ENCODE measurements at regions of chr1 and their contacts with region 1.

Region 1: DNA sequence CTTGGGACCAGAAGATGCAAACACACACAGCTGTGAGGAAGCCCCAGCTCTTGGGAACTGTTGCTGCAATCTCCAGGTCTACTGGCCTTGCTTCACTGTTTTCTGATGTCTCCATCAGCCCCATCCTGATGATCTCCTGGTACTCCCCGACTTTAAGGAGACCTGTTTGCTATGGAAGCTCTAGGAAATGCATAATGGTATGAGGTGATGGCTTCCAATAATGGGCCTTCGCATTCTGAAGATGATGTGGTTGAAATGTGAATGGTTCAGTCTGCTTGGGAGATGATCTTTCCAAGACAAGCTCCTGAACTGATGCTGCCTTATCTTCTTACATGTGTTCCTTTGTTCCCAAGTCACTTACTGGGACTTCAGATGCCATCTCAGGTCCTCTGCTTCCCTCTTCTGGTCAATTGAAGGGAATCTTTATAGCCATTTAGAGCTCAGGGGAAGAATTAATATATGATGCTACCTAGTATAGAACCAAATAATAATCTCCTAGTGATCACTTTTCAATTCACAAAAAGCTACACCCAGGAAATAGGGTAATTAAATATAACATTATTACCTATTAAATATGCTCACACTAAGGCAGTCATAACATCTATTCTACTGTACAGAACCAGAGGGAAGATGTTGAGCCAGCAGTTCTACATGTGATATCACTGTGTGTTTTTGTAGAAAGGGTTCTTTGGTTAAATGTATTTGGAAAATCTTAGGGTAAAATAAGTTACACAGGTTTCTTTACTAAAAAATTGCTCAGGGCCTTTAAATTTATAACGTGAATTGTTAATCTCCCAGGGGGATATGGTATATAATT is 73.9 kb upstream of the VTCN1 start:
- DNase-seq: no peak

Region 2: GRCh38 chr1:117067533-117068370 is 216.9 kb before region 1 on chr1:
- intact Hi-C with region 1: loop called (anchors 1 kb)
- DNase-seq: no peak

Region 3: GRCh38 chr1:117398957-117399356 is 114.3 kb after region 1 on chr1:
- intact Hi-C with region 1: no loop called
- DNase-seq: no peak

Region 4: GRCh38 chr1:117481410-117481809 is 196.8 kb after region 1 on chr1:
- intact Hi-C with region 1: no loop called
- DNase-seq: no peak

Measured in cardiac septum (tissue), 1 donor.